A549 (cell line): ENCODE measurements at regions of chr2 and their contacts with region 1.

Region 1: GRCh38 chr2:170361090-170361936 is 183.4 kb downstream of the MYO3B start:
- DNase-seq: peak; percentile 17 to 64
- ATAC-seq: peak; percentile 92 to 97
- H3K4me3 ChIP-seq: no peak overlapping the region
- H3K27ac ChIP-seq: no peak overlapping the region
- H3K4me1 ChIP-seq: no peaks in the 10 kb centered on the region
- CTCF ChIP-seq: peak; percentile 72
- EP300 ChIP-seq: no peak
- POLR2A ChIP-seq: no peak
- RAD21 ChIP-seq: peak; percentile 55 to 58

Region 2: GRCh38 chr2:170229744-170230143 is 131.6 kb before region 1 on chr2:
- CTCF ChIA-PET with region 1: interaction called, 10 read pairs
- POLR2A ChIA-PET with region 1: no interaction called
- DNase-seq: no peak
- ATAC-seq: no peak
- H3K4me3 ChIP-seq: no peak overlapping the region
- H3K27ac ChIP-seq: no peak overlapping the region
- H3K4me1 ChIP-seq: no peaks in the 10 kb centered on the region
- CTCF ChIP-seq: no peak
- EP300 ChIP-seq: no peak
- POLR2A ChIP-seq: no peak
- RAD21 ChIP-seq: no peak

Region 3: GRCh38 chr2:170324640-170325046 is 36.7 kb before region 1 on chr2:
- CTCF ChIA-PET with region 1: interaction called, 10 read pairs
- POLR2A ChIA-PET with region 1: no interaction called
- DNase-seq: peak; percentile 9 to 54
- ATAC-seq: peak; percentile 85
- H3K4me3 ChIP-seq: no peak overlapping the region
- H3K27ac ChIP-seq: no peak overlapping the region
- H3K4me1 ChIP-seq: no peaks in the 10 kb centered on the region
- CTCF ChIP-seq: peak; percentile 62
- EP300 ChIP-seq: no peak
- POLR2A ChIP-seq: no peak
- RAD21 ChIP-seq: peak; percentile 66 to 84

Region 4: DNA sequence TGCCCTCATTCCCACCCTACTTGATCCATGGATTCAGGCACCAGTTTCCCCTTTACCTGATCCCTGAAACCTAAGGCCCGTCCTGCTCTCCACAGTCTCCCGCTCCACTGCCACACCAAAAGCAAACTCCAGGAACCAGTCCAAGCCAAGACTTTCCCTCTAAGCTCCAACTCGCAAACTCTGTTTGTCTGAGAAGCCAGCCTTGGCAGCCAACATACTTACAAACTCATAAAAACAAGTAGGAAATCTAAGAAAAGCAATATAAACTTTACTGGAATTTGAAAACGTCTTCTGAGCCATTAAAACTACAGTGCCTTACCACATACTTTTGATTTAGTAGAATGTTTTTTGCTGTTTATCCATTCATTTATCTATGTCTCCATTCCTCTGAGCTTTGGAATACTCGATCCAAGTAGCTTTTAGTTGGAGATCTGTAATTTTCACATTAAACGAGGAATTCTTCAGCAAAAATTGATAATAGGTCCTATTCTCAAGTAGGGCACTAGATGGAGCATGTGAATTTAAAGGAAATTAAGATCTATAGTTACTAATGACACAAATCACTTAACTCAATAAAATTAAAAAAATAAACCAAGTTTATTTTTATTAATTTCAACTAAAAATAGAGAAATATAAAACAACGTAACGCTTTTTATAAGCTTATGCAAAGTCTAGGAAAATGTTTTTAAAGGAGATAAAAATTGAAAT is 16.3 kb after region 1 on chr2:
- CTCF ChIA-PET with region 1: interaction called, 12 read pairs
- POLR2A ChIA-PET with region 1: no interaction called
- DNase-seq: no peak
- ATAC-seq: no peak
- H3K4me3 ChIP-seq: no peak overlapping the region
- H3K27ac ChIP-seq: no peak overlapping the region
- H3K4me1 ChIP-seq: no peaks in the 10 kb centered on the region
- CTCF ChIP-seq: peak; percentile 19; the same call in 2 of the 3 replicates
- EP300 ChIP-seq: no peak
- POLR2A ChIP-seq: no peak
- RAD21 ChIP-seq: 0 out of 5 replicates have a peak, but pooled peaks of 1 of the 2 experiments have one; percentile 8

Region 5: DNA sequence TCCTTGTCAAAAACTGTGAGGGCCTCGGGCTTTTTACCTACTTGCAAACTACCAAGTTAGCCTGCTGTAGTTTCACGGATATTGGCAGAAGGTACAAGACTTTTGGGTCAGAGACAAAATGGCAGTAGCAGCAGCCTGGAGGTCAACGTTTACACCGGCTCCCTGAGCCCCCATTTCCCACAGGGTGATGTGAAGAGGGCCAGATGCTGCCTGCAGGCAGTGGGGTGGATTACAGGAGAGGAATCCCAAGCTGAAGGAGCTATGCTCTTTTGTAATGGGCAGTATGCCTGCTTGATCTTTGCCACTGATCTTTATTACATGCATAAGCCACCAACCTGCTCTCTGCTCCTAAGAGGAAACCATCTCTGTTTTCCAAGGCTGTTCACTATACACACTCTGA is 324.3 kb after region 1 on chr2:
- CTCF ChIA-PET with region 1: no interaction called
- POLR2A ChIA-PET with region 1: no interaction called
- DNase-seq: no peak
- ATAC-seq: no peak
- H3K4me3 ChIP-seq: no peak overlapping the region
- H3K27ac ChIP-seq: no peak overlapping the region
- H3K4me1 ChIP-seq: no peaks in the 10 kb centered on the region
- CTCF ChIP-seq: no peak
- EP300 ChIP-seq: no peak
- POLR2A ChIP-seq: no peak
- RAD21 ChIP-seq: no peak

Region 6: DNA sequence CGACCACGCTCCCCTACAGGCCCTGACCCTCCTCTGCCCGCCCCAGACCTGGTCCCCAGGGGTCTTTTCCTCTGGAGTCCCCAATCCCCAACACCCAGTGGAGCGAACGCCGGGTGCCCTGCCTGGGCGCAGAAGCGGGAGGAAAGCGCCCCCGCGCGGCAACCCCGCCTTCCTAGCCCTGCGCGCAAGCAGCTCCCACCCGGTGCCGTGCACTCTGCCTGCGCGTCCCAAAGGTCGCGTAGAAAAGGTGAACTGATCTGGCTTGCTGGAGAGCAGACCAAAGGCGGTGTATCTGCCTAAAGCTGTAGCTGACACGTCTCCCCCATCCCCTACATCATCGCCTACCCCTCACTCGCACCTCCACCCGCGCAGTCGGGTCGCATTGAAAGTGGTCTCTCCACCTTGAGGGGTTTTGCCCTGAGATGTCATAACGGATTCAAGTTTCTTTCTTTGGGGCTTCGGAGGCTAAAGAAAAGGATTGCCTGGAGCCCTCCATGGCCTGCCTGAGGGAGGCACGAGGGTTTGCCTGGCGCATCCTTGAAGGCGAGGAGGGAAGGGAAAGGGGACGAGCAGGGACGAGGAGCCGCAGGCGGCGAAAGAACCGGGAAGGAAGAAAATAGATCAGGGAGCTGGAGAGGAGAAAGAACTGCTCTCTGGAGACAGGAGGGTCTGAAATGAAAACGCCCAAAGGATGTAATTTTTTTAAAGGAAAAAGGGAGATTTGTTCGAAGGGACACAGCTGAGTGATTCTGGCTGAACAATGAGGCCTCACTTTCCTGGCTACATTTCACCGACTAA is 461.2 kb after region 1 on chr2:
- CTCF ChIA-PET with region 1: interaction called, 10 read pairs
- POLR2A ChIA-PET with region 1: no interaction called
- DNase-seq: peak in 1 of 2 experiments; percentile 37
- ATAC-seq: peak in 1 of 2 experiments; percentile 71; a peak in 3 of 6 replicates
- H3K4me3 ChIP-seq: peak overlapping the region; percentile 37
- H3K27ac ChIP-seq: no peak overlapping the region
- H3K4me1 ChIP-seq: peaks cover 36% of the 10 kb centered on the region
- CTCF ChIP-seq: peak; percentile 43
- EP300 ChIP-seq: no peak
- POLR2A ChIP-seq: no peak
- RAD21 ChIP-seq: peak in 1 of 2 experiments; percentile 31; a peak in 3 of 5 replicates